ENCODE measurements at regions of chr20 and their contacts with region 1.

Region 1: GRCh38 chr20:8043687-8044282 is 24.2 kb upstream of the TMX4 start:
- DNase-seq: no peak
- H3K4me3 Mint-ChIP-seq: no peak overlapping the region
- H3K27ac Mint-ChIP-seq: no peak overlapping the region
- H3K4me1 Mint-ChIP-seq: no peaks in the 10 kb centered on the region
- H3K27me3 Mint-ChIP-seq: peaks cover 11% of the 10 kb centered on the region

Region 2: GRCh38 chr20:7935027-7935551 is 108.7 kb before region 1 on chr20:
- intact Hi-C with region 1: loop called (anchors 5 kb)
- DNase-seq: no peak
- H3K4me3 Mint-ChIP-seq: no peak overlapping the region
- H3K27ac Mint-ChIP-seq: no peak overlapping the region
- H3K4me1 Mint-ChIP-seq: no peaks in the 10 kb centered on the region
- H3K27me3 Mint-ChIP-seq: peaks cover 3% of the 10 kb centered on the region

Region 3: GRCh38 chr20:8019246-8019997 is 24.4 kb before region 1 on chr20 and contains the start of gene TMX4:
- intact Hi-C with region 1: loop called (anchors 1 kb)
- DNase-seq: peak; percentile 88
- H3K4me3 Mint-ChIP-seq: peak within 1 kb of the TSS; percentile 91
- H3K27ac Mint-ChIP-seq: peak within 1 kb of the TSS; percentile 89
- H3K4me1 Mint-ChIP-seq: peaks cover 39% of the 10 kb centered on the region
- H3K27me3 Mint-ChIP-seq: peaks cover 5% of the 10 kb centered on the region
- total RNA-seq, gene TMX4: 30.4 and 31.3 TPM in 2 replicates

Region 4: DNA sequence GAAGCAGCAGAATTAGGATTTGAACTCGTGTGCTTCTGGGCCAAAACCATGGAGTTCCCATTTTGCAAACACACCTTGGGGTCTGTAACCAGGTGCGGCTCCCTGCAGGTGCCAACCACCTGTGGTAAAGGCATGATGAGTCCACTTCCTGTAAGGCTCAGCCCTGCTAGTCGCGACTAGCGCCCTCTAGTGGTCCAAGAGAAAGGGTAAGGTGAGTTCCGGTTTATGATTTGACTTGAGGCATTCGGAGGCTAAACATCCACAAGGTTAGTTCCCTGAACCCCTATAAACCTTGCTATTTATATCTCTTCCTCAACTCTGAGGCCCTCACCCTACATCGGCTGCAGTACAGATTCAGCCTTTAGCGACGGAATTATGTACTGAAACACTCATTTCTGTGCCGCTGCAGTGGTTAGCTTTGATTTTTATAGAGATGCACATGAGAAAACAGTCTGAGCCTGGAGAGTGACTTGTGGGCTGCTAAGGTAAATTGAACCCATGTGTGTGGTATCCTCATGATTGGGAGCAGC is 261.7 kb after region 1 on chr20:
- intact Hi-C with region 1: loop called (anchors 5 kb)
- DNase-seq: peak; percentile 52
- H3K4me3 Mint-ChIP-seq: no peak overlapping the region
- H3K27ac Mint-ChIP-seq: no peak overlapping the region
- H3K4me1 Mint-ChIP-seq: no peaks in the 10 kb centered on the region
- H3K27me3 Mint-ChIP-seq: no peaks in the 10 kb centered on the region

Region 5: GRCh38 chr20:8389381-8390036 is 345.7 kb after region 1 on chr20:
- intact Hi-C with region 1: loop called (anchors 1 kb)
- DNase-seq: no peak
- H3K4me3 Mint-ChIP-seq: no peak overlapping the region
- H3K27ac Mint-ChIP-seq: no peak overlapping the region
- H3K4me1 Mint-ChIP-seq: peaks cover 7% of the 10 kb centered on the region
- H3K27me3 Mint-ChIP-seq: peaks cover under 1% of the 10 kb centered on the region

Region 6: GRCh38 chr20:8722276-8722928 is 678.6 kb after region 1 on chr20:
- intact Hi-C with region 1: loop called (anchors 1 kb)
- DNase-seq: no peak
- H3K4me3 Mint-ChIP-seq: no peak overlapping the region
- H3K27ac Mint-ChIP-seq: no peak overlapping the region
- H3K4me1 Mint-ChIP-seq: no peaks in the 10 kb centered on the region
- H3K27me3 Mint-ChIP-seq: no peaks in the 10 kb centered on the region

Measured in activated T-helper 1 cell treated with anti-CD3 and anti-CD28 coated beads, Interleukin-12 subunit alpha, Interleukin-12 subunit beta, Interleukin-2, Interleukin-4 antibody, amounts not matched to agents 30 ng/mL and 10 ng/mL and 1 ng/mL, durations not matched to agents 14 hours and 24 hours and 36 hours (primary cell).